Heart right ventricle (tissue), 16 donors: ENCODE measurements at regions of chr1 and their contacts with region 1.

Region 1: GRCh38 chr1:244952940-244953339 is 88.6 kb upstream of the HNRNPU start:
- DNase-seq: no peak
- ATAC-seq: no peak
- H3K4me3 ChIP-seq: no peak overlapping the region
- H3K27ac ChIP-seq: peak overlapping the region in 4 of 10 donors; percentile 36 to 77 (median 74)
- H3K4me1 ChIP-seq: peaks cover 0 to 20% (median 6%) of the 10 kb centered on the region in 9 donors
- H3K27me3 ChIP-seq: no peaks in the 10 kb centered on the region
- CTCF ChIP-seq: no peak

Region 2: GRCh38 chr1:244826712-244827111 is 126.2 kb before region 1 on chr1:
- intact Hi-C with region 1: no loop called
- DNase-seq: no peak
- ATAC-seq: no peak
- H3K4me3 ChIP-seq: no peak overlapping the region
- H3K27ac ChIP-seq: no peak overlapping the region
- H3K4me1 ChIP-seq: peaks cover 0 to 4% (median 0%) of the 10 kb centered on the region in 9 donors
- H3K27me3 ChIP-seq: no peaks in the 10 kb centered on the region
- CTCF ChIP-seq: no peak

Region 3: GRCh38 chr1:244881552-244882280 is 71.2 kb before region 1 on chr1:
- intact Hi-C with region 1: loop called in 1 of 10 experiments (anchors 5 kb)
- DNase-seq: no peak
- ATAC-seq: no peak
- H3K4me3 ChIP-seq: no peak overlapping the region
- H3K27ac ChIP-seq: no peak overlapping the region
- H3K4me1 ChIP-seq: no peaks in the 10 kb centered on the region
- H3K27me3 ChIP-seq: no peaks in the 10 kb centered on the region
- CTCF ChIP-seq: no peak